ENCODE measurements at regions of chr4 and their contacts with region 1.

Region 1: GRCh38 chr4:152500800-152501434 is 35.0 kb downstream of the FBXW7 start:
- DNase-seq: peak; percentile 88
- ATAC-seq: peak; percentile 75
- H3K4me3 ChIP-seq: no peak overlapping the region
- H3K4me3 Mint-ChIP-seq: peak overlapping the region; percentile 38
- H3K27ac ChIP-seq: peak overlapping the region in 1 of 2 donors; percentile 21
- H3K27ac Mint-ChIP-seq: peak overlapping the region; percentile 75
- H3K4me1 ChIP-seq: peaks cover 0 to 10% of the 10 kb centered on the region in 2 donors
- H3K4me1 Mint-ChIP-seq: peaks cover 31% of the 10 kb centered on the region
- H3K27me3 ChIP-seq: no peaks in the 10 kb centered on the region
- H3K27me3 Mint-ChIP-seq: no peaks in the 10 kb centered on the region
- CTCF ChIP-seq: peak; percentile 96

Region 2: GRCh38 chr4:151760712-151761527 is 740.0 kb before region 1 on chr4 and contains the start of gene GATB:
- CTCF ChIA-PET with region 1: no interaction called
- POLR2A ChIA-PET with region 1: no interaction called
- intact Hi-C with region 1: no loop called
- DNase-seq: peak; percentile 95
- ATAC-seq: peak; percentile 96
- H3K4me3 ChIP-seq: peak within 1 kb of the TSS; percentile 77 to 97 (median 83)
- H3K4me3 Mint-ChIP-seq: peak within 1 kb of the TSS; percentile 98
- H3K27ac ChIP-seq: peak within 1 kb of the TSS; percentile 60 to 77
- H3K27ac Mint-ChIP-seq: peak within 1 kb of the TSS; percentile 96
- H3K4me1 ChIP-seq: peaks cover 11 to 13% of the 10 kb centered on the region in 2 donors
- H3K4me1 Mint-ChIP-seq: peaks cover 17% of the 10 kb centered on the region
- H3K27me3 ChIP-seq: peaks cover 0 to 3% (median 0%) of the 10 kb centered on the region in 4 experiments
- H3K27me3 Mint-ChIP-seq: peaks cover 12% of the 10 kb centered on the region
- CTCF ChIP-seq: peak; percentile 74
- total RNA-seq, gene GATB: 19.2 and 22.7 TPM in 2 replicates

Region 3: DNA sequence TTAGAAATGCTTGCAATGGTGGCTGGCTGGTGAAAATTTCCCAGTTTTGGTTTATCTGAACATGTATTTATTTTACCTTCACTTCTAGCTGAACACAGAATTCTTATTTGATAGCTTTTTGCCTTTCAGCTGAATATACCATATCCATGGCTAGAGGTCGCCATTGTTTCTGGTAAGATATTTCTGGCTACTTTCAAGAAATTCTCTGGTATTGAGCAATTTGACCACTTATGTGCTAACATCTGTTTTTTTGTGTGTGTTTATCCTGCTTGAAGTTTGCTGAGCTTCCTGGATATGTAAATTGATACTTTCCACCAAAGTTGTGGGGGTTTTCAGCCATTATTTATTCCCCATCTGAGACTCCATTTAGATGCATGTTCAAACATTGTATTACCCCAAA is 40.4 kb before region 1 on chr4:
- CTCF ChIA-PET with region 1: interaction called, 14 read pairs
- POLR2A ChIA-PET with region 1: interaction called, 4 read pairs
- intact Hi-C with region 1: loop called (anchors 5 kb)
- DNase-seq: no peak
- ATAC-seq: no peak
- H3K4me3 ChIP-seq: peak overlapping the region in 1 of 5 experiments; percentile 12
- H3K4me3 Mint-ChIP-seq: peak overlapping the region; percentile 66
- H3K27ac ChIP-seq: peak overlapping the region; percentile 30 to 60
- H3K27ac Mint-ChIP-seq: peak overlapping the region; percentile 69
- H3K4me1 ChIP-seq: peaks cover 68 to 73% of the 10 kb centered on the region in 2 donors
- H3K4me1 Mint-ChIP-seq: peaks cover 77% of the 10 kb centered on the region
- H3K27me3 ChIP-seq: no peaks in the 10 kb centered on the region
- H3K27me3 Mint-ChIP-seq: no peaks in the 10 kb centered on the region
- CTCF ChIP-seq: no peak

Region 4: DNA sequence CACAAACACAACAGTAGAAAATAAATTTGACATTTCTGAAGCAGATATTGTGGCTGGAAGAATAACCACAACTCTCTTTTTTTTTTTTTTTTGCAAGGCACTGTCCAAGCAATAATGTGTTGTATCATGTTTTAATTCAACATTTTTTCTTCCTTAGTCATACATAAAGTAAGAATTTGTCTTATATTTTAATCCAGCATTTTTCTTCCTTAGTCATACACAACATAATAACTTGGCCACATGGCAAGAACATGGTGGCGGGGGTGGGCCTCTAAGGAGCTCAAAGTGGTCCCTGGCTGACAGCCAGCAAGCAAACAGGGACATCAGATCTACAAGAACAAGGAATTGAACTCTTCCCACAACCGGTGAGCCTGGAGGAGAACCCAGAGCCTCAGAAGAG is 14.8 kb after region 1 on chr4:
- CTCF ChIA-PET with region 1: interaction called, 15 read pairs
- POLR2A ChIA-PET with region 1: no interaction called
- intact Hi-C with region 1: loop called (anchors 2 kb)
- DNase-seq: no peak
- ATAC-seq: no peak
- H3K4me3 ChIP-seq: no peak overlapping the region
- H3K4me3 Mint-ChIP-seq: no peak overlapping the region
- H3K27ac ChIP-seq: no peak overlapping the region
- H3K27ac Mint-ChIP-seq: no peak overlapping the region
- H3K4me1 ChIP-seq: peaks cover 11% of the 10 kb centered on the region in 2 donors
- H3K4me1 Mint-ChIP-seq: peaks cover 40% of the 10 kb centered on the region
- H3K27me3 ChIP-seq: no peaks in the 10 kb centered on the region
- H3K27me3 Mint-ChIP-seq: no peaks in the 10 kb centered on the region
- CTCF ChIP-seq: no peak

Region 5: DNA sequence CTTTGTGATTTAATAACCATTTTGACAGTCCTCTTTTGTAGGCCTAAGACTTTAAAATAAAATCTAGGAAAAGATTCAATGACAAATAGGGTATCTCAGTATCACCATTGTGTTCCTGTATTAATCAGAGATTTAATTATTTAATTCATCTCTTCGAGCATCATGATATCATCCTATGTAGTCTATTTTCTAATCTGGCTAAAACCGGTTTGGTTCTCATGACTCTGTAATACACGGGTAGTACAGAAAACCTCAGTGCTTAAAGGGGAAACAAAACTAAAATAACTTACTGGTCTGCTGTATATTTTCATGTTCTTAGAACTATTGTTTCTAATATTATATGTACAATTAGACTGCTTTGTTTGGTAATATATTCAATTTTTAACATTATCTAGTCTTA is 58.7 kb after region 1 on chr4:
- CTCF ChIA-PET with region 1: interaction called, 14 read pairs
- POLR2A ChIA-PET with region 1: no interaction called
- intact Hi-C with region 1: no loop called
- DNase-seq: no peak
- ATAC-seq: no peak
- H3K4me3 ChIP-seq: no peak overlapping the region
- H3K4me3 Mint-ChIP-seq: no peak overlapping the region
- H3K27ac ChIP-seq: no peak overlapping the region
- H3K27ac Mint-ChIP-seq: no peak overlapping the region
- H3K4me1 ChIP-seq: peaks cover 6% of the 10 kb centered on the region in 2 donors
- H3K4me1 Mint-ChIP-seq: peaks cover 39% of the 10 kb centered on the region
- H3K27me3 ChIP-seq: no peaks in the 10 kb centered on the region
- H3K27me3 Mint-ChIP-seq: no peaks in the 10 kb centered on the region
- CTCF ChIP-seq: no peak

Measured in B cell (primary cell).